ENCODE measurements at regions of chr9 and their contacts with region 1.

Region 1: GRCh38 chr9:128521956-128522355 is 17.4 kb downstream of the GLE1 start:
- DNase-seq: no peak
- H3K4me3 Mint-ChIP-seq: no peak overlapping the region
- H3K27ac Mint-ChIP-seq: no peak overlapping the region
- H3K4me1 Mint-ChIP-seq: no peaks in the 10 kb centered on the region
- H3K27me3 Mint-ChIP-seq: no peaks in the 10 kb centered on the region
- CTCF ChIP-seq: no peak

Region 2: DNA sequence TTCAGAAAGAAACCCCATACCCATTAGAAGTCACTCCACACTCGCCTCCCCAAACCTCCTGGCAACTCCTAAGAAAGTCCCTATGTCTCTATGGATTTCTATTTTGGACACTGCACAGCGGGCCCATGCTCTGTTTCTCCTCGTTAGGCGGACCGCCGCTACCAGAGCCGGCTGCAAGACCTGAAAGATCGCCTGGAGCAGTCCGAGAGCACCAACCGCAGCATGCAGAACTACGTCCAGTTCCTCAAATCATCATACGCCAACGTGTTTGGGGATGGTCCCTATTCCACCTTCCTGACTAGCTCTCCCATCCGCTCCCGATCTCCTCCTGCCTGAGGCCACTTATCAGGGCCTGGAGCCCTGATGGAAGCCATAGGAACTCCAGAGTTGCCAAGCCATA is 22.0 kb before region 1 on chr9:
- CTCF ChIA-PET with region 1: interaction called, 10 read pairs
- intact Hi-C with region 1: no loop called
- DNase-seq: no peak
- H3K4me3 Mint-ChIP-seq: no peak overlapping the region
- H3K27ac Mint-ChIP-seq: no peak overlapping the region
- H3K4me1 Mint-ChIP-seq: no peaks in the 10 kb centered on the region
- H3K27me3 Mint-ChIP-seq: no peaks in the 10 kb centered on the region
- CTCF ChIP-seq: no peak